Gastrocnemius medialis (tissue), 4 donors: ENCODE measurements at regions of chr6 and their contacts with region 1.

Region 1: DNA sequence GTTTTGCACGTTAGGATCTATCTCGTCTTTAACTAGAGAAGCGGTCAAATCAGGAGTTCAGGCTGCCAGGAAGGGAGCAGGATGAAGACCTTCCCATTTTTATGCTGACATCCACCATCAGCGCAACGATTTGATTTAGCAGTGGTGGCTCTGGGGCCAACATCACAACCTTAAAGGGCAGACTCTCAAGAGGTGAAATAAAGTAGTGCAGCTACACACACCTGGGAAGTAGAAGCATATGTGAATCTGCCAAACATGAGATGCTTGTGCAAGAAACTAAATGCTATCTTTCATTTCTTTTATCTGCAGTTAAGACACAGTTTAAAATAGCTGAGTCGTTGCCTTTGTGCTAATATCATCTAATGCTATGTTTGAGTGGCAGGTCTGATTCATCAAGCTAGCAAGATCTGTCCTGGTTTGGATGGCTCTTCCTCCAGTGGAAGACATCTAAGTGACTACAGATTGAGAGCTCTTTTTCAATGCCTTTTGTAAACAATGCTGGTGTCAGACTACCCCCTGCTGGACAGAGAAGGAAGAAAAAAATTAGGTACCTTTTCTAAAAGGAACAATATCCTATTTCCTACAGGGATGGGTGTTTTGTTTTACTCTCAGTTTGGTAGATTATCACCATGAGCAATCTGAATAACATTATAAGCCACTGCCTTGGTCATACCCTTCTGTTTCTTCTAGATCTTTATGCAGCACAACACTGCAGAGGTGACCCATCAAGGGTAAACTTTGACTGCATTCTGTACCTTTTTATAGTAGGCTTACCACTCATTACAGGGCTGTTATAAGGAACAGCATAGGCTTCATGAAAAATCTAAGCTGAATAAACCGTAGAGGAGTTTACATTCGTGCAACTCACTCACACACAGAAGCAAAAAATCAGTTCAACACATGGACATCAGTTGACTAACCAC is 171.6 kb upstream of the FBXL4 start:
- DNase-seq: no peak
- ATAC-seq: peak in 1 of 2 donors; percentile 36
- H3K4me3 ChIP-seq: no peak overlapping the region
- H3K27ac ChIP-seq: no peak overlapping the region
- H3K4me1 ChIP-seq: no peaks in the 10 kb centered on the region
- H3K27me3 ChIP-seq: no peaks in the 10 kb centered on the region
- CTCF ChIP-seq: peak; percentile 8 to 74 (median 52)
- POLR2A ChIP-seq: no peak

Region 2: DNA sequence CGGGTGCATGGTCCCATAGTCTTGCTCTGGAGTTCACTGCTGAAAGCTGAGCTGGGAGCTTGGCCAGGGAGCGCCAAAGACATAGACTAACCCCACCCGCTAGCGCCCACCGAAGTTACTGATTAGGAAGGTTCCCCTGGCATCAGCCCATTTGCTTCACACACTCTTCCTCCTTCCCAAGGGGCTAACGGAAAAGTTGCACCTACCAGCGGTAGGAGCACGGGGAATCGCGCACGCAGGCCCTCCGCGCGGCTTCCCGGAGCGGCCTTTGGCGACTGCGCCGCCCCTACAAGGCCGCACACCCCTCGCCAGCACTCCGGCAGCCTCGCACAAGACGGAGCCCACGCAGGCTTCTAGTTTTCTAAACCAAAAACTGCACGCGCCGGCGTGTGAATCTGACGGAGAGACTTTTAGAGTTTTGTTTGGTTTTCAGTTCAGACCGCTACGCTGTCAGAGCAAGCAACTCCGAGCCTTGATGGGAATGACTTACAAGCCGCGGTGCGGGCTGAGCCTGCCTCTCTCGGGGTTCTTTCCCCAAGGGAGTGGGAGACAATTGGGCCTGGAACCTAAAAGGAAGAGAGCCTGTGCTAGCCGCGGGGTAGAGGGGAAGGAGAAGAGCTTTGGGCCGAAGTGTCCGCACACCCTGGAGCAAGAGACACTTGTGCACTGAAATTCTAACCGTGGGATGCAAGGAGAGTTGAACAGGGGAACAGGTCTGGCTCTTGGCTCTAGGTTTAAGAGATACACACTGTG is 285.9 kb before region 1 on chr6:
- in situ Hi-C with region 1: no loop called
- intact Hi-C with region 1: loop called (anchors 1 kb)
- DNase-seq: no peak
- ATAC-seq: peak; percentile 14 to 47
- H3K4me3 ChIP-seq: peak overlapping the region; percentile 50 to 59 (median 54)
- H3K27ac ChIP-seq: no peak overlapping the region
- H3K4me1 ChIP-seq: peaks cover 15 to 42% of the 10 kb centered on the region in 2 donors
- H3K27me3 ChIP-seq: peaks cover 92 to 98% (median 94%) of the 10 kb centered on the region in 3 donors
- CTCF ChIP-seq: no peak
- POLR2A ChIP-seq: no peak

Region 3: DNA sequence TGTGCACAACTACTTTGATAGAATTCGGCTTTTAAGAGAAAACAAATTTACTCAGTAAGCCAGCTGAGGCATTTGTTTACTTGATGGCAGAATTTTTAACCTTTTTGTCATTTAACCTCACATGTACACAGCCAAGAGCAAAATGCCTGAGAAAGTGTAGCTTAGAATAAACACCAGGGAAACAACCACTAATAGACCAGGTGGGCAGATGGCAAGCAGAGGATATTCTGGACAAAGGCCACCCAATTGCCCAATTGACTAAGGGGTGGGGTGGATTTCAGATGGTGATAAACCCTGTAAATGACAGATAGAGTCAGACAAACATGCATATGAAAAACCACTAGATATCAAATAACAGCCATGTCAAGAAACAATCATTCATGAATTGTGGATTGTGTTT is 19.1 kb after region 1 on chr6:
- in situ Hi-C with region 1: no loop called
- intact Hi-C with region 1: no loop called
- DNase-seq: no peak
- ATAC-seq: no peak
- H3K4me3 ChIP-seq: no peak overlapping the region
- H3K27ac ChIP-seq: no peak overlapping the region
- H3K4me1 ChIP-seq: no peaks in the 10 kb centered on the region
- H3K27me3 ChIP-seq: no peaks in the 10 kb centered on the region
- CTCF ChIP-seq: no peak
- POLR2A ChIP-seq: no peak

Region 4: GRCh38 chr6:99568103-99568933 is 448.9 kb after region 1 on chr6 and contains the start of gene CCNC:
- in situ Hi-C with region 1: no loop called
- intact Hi-C with region 1: no loop called
- DNase-seq: peak; percentile 87 to 95
- ATAC-seq: peak; percentile 98 to 99
- H3K4me3 ChIP-seq: peak within 1 kb of the TSS; percentile 84 to 99 (median 93)
- H3K27ac ChIP-seq: peak within 1 kb of the TSS; percentile 83 to 91 (median 89)
- H3K4me1 ChIP-seq: peaks cover 19 to 31% of the 10 kb centered on the region in 2 donors
- H3K27me3 ChIP-seq: no peaks in the 10 kb centered on the region
- CTCF ChIP-seq: peak in 1 of 5 experiments; percentile 11
- POLR2A ChIP-seq: peak; percentile 74
- total RNA-seq, gene CCNC: 18.1 to 45.4 (median 25.8) TPM